Activated T-helper 2 cell treated with anti-CD3 and anti-CD28 coated beads, Interferon-gamma antibody, Interleukin-2, Interleukin-4, amounts not matched to agents 10 μg/mL and 5 μg/mL and 100 μg/mL, durations not matched to agents 14 hours and 24 hours and 36 hours (primary cell): ENCODE measurements at regions of chr7 and their contacts with region 1.

Region 1: GRCh38 chr7:45111298-45112223 is at the start of gene TBRG4:
- DNase-seq: peak; percentile 93
- H3K4me3 Mint-ChIP-seq: peak within 1 kb of the TSS; percentile 98
- H3K27ac Mint-ChIP-seq: peak within 1 kb of the TSS; percentile 96
- H3K4me1 Mint-ChIP-seq: peaks cover 34% of the 10 kb centered on the region
- H3K27me3 Mint-ChIP-seq: peaks cover 20% of the 10 kb centered on the region
- total RNA-seq, gene TBRG4: 167 and 180 TPM in 2 replicates

Region 2: DNA sequence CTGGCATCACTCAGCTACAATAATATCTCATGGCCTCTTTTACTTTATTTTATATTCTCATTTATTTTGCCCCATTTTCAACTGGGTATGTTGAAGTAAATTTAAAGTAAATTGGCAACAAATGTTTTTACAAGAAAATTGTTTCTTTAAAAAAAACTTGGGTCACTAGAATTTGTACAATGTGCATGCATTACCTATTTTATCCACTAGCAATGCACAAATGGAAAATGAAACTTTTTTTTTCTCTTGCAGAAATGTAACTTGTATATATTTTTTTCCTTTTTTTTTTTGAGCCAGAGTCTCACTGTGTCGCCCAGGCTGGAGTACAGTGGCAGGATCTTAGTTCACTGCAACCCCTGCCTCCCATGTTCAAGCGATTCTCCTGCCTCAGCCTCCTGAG is 253.4 kb before region 1 on chr7:
- intact Hi-C with region 1: loop called (anchors 5 kb)
- DNase-seq: no peak
- H3K4me3 Mint-ChIP-seq: no peak overlapping the region
- H3K27ac Mint-ChIP-seq: no peak overlapping the region
- H3K4me1 Mint-ChIP-seq: peaks cover 13% of the 10 kb centered on the region
- H3K27me3 Mint-ChIP-seq: peaks cover 10% of the 10 kb centered on the region

Region 3: DNA sequence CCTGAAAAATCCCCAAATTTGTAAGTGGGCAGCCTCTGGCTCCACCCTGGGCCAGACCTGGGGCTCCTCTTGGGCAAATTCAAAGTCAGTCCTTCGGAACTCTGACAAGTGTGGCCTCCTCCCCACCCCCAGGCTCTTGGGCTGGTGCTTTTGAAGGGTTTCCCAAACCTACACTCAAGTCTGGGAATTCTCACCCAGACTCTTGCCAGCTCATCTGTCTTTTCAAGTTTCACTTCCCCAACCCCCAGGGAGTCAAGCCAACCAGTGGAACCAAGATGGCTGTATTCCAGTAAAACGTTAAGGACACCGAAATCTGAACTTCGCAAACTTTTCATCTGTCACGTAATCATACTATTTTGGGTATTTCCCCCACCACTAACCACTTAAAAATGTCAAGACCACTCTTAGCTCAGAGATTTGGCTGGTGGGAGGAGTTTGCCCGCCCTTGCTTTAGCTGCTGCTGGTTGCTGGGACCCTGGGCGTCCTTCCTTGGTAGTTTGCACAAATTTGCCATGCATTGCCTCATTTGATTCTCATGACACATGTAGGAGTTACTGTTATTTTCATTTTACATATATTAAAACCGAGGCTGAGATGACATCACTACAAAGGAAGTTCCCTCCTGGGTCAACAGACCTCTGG is 131.0 kb before region 1 on chr7:
- intact Hi-C with region 1: loop called (anchors 2 kb)
- DNase-seq: peak; percentile 56
- H3K4me3 Mint-ChIP-seq: peak overlapping the region; percentile 97
- H3K27ac Mint-ChIP-seq: peak overlapping the region; percentile 98
- H3K4me1 Mint-ChIP-seq: peaks cover 63% of the 10 kb centered on the region
- H3K27me3 Mint-ChIP-seq: no peaks in the 10 kb centered on the region

Region 4: DNA sequence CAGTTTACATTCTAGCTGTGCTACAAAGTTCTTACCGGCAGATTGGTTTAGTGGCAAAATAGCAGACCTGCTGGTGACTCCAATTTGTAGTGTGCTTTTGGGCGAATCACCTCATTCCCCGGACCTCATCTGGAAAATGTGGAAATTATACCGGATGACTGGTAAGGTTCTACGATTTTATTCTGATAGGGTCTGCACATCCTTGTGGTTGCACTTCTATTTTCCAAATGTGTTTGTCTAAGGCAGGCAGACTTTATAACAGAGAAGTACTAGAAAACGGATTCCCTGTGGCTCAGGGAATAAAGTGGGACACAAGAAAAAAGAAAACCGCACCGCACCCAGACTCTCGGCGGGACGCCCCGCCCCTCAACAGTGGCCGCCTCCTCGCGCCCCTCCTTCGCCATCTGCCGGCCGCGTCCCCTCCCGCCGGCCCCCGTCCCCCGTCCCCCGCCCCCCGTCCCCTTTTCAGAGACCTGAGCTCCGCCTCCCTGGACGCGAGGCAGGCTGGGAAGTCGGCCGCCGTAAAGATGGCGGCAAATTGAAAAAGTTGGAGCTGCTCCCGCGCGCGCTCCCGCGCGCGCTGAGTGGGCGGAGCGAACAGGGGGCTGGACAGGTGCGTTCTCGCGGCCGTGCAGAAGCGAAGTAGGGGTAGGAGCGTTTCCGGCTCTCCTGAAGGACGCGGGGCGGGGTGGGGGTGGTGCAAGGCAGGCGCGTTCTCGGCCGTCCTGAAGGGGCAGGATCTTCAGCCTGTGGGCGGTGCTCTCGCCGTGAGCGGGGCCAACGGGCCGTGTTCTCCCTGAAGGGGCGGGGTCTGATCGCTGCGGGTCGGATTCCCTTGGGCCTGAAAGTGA is 112.1 kb before region 1 on chr7:
- intact Hi-C with region 1: loop called (anchors 1 kb)
- DNase-seq: peak; percentile 100
- H3K4me3 Mint-ChIP-seq: peak overlapping the region; percentile 86
- H3K27ac Mint-ChIP-seq: peak overlapping the region; percentile 93
- H3K4me1 Mint-ChIP-seq: peaks cover 50% of the 10 kb centered on the region
- H3K27me3 Mint-ChIP-seq: no peaks in the 10 kb centered on the region

Region 5: DNA sequence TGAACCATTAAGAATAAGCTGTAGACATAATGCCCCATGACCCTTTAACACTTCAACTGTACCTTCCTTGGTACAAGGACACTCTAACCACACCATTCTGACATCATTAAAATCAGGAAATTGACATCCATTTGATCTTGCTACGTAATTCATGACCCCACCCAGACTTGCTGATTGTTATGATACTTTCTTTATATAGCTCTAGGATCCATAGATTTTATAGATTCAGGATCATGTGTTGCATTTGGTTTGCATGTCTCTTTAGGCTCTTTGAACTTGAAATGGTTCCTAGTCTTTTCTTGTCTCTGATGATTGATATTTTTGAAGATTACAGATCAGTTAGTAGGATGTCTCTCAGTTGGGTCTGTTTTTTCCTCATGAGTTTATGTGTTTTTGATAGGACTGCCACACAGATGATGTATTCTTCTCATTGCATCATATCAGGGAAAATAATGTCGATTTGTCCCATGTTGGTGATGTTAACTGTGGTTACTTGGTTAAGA is 98.0 kb before region 1 on chr7:
- intact Hi-C with region 1: no loop called
- DNase-seq: no peak
- H3K4me3 Mint-ChIP-seq: no peak overlapping the region
- H3K27ac Mint-ChIP-seq: peak overlapping the region; percentile 16
- H3K4me1 Mint-ChIP-seq: peaks cover 31% of the 10 kb centered on the region
- H3K27me3 Mint-ChIP-seq: no peaks in the 10 kb centered on the region

Region 6: GRCh38 chr7:45026984-45027773 is 84.4 kb before region 1 on chr7:
- intact Hi-C with region 1: loop called (anchors 2 kb)
- DNase-seq: peak; percentile 29
- H3K4me3 Mint-ChIP-seq: peak overlapping the region; percentile 84
- H3K27ac Mint-ChIP-seq: peak overlapping the region; percentile 83
- H3K4me1 Mint-ChIP-seq: peaks cover 65% of the 10 kb centered on the region
- H3K27me3 Mint-ChIP-seq: no peaks in the 10 kb centered on the region